ENCODE measurements at regions of chr2 and their contacts with region 1.

Region 1: GRCh38 chr2:120343433-120344105 is 2.4 kb upstream of the INHBB start:
- DNase-seq: peak; percentile 78
- H3K4me3 Mint-ChIP-seq: peak overlapping the region; percentile 39
- H3K27ac Mint-ChIP-seq: no peak overlapping the region
- H3K4me1 Mint-ChIP-seq: peaks cover 22% of the 10 kb centered on the region
- H3K27me3 Mint-ChIP-seq: peaks cover 48% of the 10 kb centered on the region

Region 2: DNA sequence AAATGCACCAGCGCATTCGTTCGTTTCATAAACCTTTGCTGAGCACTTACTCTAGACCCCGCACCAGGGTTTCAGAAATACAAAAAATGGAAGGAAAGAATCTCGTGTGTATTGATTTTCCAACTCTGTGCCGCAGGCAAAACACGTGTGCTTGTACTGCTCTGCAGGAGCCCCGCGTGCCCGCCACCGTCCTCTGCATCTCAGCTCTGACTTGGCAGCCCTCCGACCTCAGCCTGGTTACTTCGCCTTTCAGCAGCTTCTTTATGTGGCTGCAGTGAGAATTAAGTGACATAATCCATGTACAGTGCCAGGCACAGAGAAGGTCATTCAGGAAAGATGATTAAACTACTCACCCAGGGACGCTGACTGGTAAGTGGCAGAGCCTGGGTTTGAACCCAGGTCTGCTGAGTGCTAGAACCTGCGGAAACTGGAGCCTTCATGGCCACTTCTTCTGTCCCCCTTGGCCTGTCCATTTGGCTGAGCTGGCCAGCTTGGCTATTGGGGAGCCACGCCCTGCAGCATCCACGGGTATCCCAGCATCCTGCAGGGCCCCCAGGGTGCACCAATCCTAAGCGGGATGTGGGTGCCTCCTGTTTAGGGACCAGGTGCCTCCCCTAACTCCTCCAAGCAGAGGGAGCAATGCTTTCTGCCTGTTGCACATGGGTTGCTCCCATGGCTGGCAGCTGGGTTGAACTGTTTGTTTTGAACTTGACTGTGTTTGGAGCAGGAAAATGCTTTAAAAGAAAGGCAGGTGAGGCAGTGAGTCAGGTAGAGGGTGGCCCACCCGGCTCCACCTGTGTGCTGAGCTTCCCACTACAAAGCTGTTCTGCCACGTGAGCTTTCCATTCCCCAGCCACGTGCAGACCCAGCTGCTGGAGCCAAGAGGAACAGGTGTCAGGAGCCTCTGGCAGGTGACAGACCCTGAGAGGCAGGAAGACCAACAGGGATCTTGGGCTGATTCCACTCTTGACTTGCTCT is 36.6 kb after region 1 on chr2:
- CTCF ChIA-PET with region 1: no interaction called
- POLR2A ChIA-PET with region 1: no interaction called
- intact Hi-C with region 1: no loop called
- DNase-seq: no peak
- H3K4me3 Mint-ChIP-seq: no peak overlapping the region
- H3K27ac Mint-ChIP-seq: no peak overlapping the region
- H3K4me1 Mint-ChIP-seq: no peaks in the 10 kb centered on the region
- H3K27me3 Mint-ChIP-seq: peaks cover 7% of the 10 kb centered on the region

Region 3: GRCh38 chr2:120392923-120393322 is 49.4 kb after region 1 on chr2:
- CTCF ChIA-PET with region 1: no interaction called
- POLR2A ChIA-PET with region 1: no interaction called
- intact Hi-C with region 1: no loop called
- DNase-seq: no peak
- H3K4me3 Mint-ChIP-seq: no peak overlapping the region
- H3K27ac Mint-ChIP-seq: no peak overlapping the region
- H3K4me1 Mint-ChIP-seq: no peaks in the 10 kb centered on the region
- H3K27me3 Mint-ChIP-seq: peaks cover 9% of the 10 kb centered on the region

Region 4: GRCh38 chr2:120436885-120437603 is 93.5 kb after region 1 on chr2:
- CTCF ChIA-PET with region 1: interaction called, 4 read pairs
- POLR2A ChIA-PET with region 1: no interaction called
- intact Hi-C with region 1: loop called (anchors 2 kb)
- DNase-seq: peak; percentile 34
- H3K4me3 Mint-ChIP-seq: no peak overlapping the region
- H3K27ac Mint-ChIP-seq: no peak overlapping the region
- H3K4me1 Mint-ChIP-seq: no peaks in the 10 kb centered on the region
- H3K27me3 Mint-ChIP-seq: peaks cover 22% of the 10 kb centered on the region

Region 5: DNA sequence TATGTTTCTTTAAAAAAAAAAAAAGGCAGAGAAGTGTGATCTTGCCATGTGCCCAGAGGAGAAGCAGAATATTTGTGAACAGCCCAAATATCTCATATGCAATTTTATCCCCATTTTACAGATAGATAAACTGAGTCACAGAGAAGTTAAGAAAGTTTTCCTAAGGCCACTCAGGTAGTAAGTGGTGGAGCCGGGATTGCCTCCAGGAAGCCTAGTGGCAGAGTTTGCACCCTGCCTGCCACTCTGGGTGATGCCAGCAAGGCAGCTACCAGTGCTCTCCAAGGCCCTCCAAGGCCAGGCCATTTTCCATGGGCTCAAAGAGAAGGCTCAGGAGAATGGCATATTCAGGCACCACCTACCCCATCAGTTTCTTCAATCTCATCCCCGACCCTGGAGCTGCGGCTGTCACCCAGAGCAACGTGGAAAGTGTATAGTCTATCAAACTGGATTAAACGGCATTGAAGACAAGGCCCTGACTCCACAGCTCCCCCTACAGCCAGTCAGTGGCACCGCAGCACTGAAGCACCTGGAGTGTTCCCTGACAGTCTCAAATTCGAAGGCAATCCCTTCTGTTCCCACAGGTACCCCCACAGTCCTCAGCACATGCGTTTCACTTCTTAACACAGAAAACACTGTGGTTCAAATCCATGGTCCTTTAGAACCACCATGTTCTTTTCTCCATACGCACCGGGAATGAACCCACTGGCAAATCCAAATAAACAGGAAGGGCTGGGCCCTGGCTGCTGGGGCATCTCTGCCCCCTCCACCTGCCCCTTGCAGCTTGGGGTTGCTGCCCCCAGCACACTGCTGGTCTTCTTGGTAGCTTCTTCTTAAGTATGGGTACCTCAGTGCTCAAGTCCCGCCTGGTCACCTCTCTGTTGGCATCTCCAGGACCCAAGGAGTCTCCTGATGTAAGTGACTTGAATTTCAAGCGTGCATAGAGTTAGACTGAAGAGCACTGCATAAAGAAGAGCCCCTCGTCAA is 177.7 kb after region 1 on chr2:
- CTCF ChIA-PET with region 1: interaction called, 3 read pairs
- POLR2A ChIA-PET with region 1: no interaction called
- intact Hi-C with region 1: loop called (anchors 1 kb)
- DNase-seq: peak; percentile 50
- H3K4me3 Mint-ChIP-seq: no peak overlapping the region
- H3K27ac Mint-ChIP-seq: no peak overlapping the region
- H3K4me1 Mint-ChIP-seq: no peaks in the 10 kb centered on the region
- H3K27me3 Mint-ChIP-seq: peaks cover 20% of the 10 kb centered on the region

Region 6: DNA sequence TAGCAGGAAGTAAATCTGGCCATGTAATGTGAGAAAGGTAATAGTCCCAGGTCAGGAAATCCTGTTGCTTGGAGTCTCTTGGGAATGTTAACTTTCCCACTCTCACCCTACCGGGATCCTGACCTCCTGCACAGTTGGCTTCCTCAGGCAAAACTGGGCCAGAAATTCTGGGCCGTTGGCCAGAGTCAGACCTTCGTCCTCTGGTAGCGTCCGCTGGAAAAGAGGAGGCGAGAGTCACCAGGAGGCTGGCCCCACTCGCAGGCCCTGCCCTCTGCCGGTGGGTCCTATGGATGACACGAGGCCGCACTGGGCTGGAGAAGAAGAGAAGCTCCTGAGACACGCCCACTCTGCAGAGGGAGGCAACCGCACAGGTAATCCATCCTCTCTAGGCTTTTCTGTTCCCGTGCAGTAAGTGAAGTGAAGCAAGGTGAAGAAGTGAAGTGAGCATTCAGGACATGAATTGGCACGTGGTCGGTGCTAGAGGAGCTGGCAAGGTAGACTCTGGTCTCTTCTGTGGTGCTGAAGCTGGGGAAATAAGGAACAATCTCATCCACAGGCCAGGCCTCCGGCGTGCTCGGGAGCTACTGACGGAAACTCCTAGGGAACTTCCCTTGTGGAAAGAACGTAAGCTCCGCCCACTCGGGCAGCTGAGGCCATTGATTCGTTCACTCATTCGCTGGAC is 209.4 kb after region 1 on chr2:
- CTCF ChIA-PET with region 1: interaction called, 22 read pairs
- POLR2A ChIA-PET with region 1: no interaction called
- intact Hi-C with region 1: loop called (anchors 5 kb)
- DNase-seq: peak; percentile 57
- H3K4me3 Mint-ChIP-seq: no peak overlapping the region
- H3K27ac Mint-ChIP-seq: no peak overlapping the region
- H3K4me1 Mint-ChIP-seq: peaks cover 3% of the 10 kb centered on the region
- H3K27me3 Mint-ChIP-seq: peaks cover 18% of the 10 kb centered on the region

Region 7: DNA sequence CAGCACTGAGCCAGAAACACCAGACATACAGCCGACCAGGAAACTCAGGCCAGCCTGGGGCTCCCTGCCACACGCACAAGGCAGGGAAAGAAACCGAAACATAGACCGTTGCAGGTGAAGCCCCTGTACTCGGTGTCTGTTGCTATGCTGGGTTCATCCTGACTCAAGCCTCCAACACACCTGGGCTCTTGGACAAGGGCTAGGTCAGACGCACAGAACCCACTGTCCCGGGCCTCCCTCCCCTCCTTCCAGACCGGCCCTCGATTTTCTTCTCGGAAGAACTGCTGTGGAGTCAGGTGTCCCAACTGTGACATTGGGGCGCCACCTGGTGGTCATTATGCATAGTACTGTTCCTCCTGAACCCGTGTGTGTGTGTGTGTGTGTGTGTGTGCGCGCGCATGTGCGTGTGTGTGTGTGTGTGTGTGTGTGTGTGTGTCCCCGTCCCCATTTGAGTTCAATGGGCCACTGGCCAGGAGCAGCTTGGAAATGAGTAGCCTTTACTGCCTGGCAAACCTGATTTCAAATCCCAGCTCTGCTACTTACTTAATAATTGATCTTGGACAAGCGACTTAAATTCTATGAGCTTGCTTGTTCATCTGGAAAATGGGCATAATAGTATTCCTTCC is 336.7 kb after region 1 on chr2:
- CTCF ChIA-PET with region 1: interaction called, 19 read pairs
- POLR2A ChIA-PET with region 1: no interaction called
- intact Hi-C with region 1: loop called (anchors 1 kb)
- DNase-seq: peak; percentile 79
- H3K4me3 Mint-ChIP-seq: no peak overlapping the region
- H3K27ac Mint-ChIP-seq: no peak overlapping the region
- H3K4me1 Mint-ChIP-seq: peaks cover 2% of the 10 kb centered on the region
- H3K27me3 Mint-ChIP-seq: peaks cover 13% of the 10 kb centered on the region